A549 (cell line): ENCODE measurements at regions of chr14 and their contacts with region 1.

Region 1: DNA sequence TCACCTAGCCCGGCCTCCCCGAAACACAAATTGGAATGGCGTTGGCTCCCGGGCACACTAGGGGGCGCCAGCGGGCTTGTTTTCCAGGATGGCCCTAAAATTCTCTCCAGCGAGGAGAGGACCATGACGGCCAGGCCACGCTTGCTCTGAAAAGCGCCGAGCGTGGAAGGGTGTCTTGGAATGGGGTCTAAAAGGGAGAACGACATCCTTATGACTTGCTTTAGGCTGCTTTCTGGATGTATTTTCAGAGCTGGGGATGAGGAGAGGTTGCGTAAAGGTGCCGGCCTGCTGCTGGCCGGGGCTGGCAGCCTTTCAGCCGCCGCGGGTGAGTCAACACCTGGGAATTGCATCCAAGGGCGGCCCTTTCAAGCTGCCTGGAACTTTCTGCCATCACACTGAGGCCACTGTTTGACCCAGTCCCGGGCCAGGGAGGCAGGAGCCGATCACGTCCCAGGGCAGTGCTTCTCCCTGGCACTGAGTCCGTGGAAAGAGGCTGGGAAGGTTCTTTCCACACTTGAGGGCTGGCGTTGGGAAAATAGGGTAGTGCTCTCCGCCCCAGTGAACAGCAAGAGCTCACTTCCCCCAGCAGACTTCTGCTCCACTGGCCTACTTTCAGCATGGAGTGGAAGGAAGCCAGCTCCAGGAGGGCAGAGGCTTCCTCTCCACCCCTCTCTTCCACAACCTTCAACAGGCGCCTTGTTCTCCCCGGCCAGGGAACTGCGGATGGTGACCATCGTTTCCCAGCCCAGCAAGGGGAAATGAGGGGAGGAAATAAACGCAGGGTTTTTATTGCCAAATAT is 216.2 kb downstream of the TTC8 start:
- DNase-seq: peak; percentile 76
- ATAC-seq: peak; percentile 93 to 96
- H3K4me3 ChIP-seq: peak overlapping the region; percentile 44
- H3K27ac ChIP-seq: peak overlapping the region; percentile 81 to 88
- H3K4me1 ChIP-seq: peaks cover 10% of the 10 kb centered on the region
- CTCF ChIP-seq: peak; percentile 95
- EP300 ChIP-seq: no peak
- POLR2A ChIP-seq: no peak
- RAD21 ChIP-seq: peak; percentile 91 to 97

Region 2: DNA sequence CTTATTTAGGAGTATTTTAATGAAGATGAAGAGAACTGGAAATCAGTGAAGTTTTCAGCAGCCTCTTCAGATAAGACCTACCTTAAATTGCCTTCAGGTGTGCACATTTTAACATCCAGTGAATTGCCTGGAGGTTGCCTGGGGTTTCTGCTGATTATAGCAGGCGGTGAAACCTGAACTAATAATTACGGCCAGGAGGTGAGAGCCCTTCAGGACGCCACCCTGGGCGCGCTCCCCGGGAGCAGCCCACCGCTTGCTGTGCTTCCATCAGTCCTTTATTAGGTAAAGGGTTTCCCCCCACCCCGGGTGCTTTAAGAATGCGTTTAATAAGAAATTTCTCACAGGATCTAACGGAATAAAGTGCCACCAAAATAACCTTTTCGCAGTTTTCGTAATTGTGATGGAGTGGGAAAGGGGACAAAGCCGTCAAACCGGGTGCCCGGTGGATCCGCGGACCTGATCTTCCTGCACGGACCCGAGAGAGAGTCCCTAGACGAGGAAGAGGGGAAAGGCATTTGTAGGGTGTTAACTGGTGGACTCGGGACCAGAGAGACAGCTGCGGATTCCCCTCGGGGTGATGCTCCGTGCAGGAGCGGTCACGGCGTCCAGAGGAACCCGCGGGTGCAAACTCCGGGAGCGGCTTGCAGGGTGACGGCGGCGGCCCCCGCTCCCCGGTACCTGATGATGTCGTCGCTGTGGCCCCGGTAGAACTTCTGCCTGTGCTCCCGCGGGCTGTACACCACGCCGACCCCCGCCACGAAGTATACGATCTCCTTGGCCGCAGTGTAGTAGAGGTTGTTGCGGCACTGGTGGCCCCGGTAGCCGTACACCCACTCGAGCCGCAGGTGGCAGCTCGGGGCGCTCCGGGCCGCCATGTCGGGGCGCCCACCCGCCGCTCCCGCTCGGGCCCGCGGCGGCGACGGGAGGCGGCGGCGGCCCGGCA is 248.8 kb before region 1 on chr14:
- CTCF ChIA-PET with region 1: no interaction called
- POLR2A ChIA-PET with region 1: no interaction called
- DNase-seq: peak; percentile 5
- ATAC-seq: peak; percentile 24 to 27
- H3K4me3 ChIP-seq: peak overlapping the region; percentile 62
- H3K27ac ChIP-seq: peak overlapping the region; percentile 62 to 81
- H3K4me1 ChIP-seq: 0 out of 3 replicates have a peak, but pooled peaks cover 5% of the 10 kb centered on the region
- CTCF ChIP-seq: no peak
- EP300 ChIP-seq: no peak
- POLR2A ChIP-seq: no peak
- RAD21 ChIP-seq: no peak

Region 3: GRCh38 chr14:89085737-89086382 is 45.2 kb after region 1 on chr14:
- CTCF ChIA-PET with region 1: no interaction called
- POLR2A ChIA-PET with region 1: no interaction called
- DNase-seq: no peak
- ATAC-seq: no peak
- H3K4me3 ChIP-seq: no peak overlapping the region
- H3K27ac ChIP-seq: no peak overlapping the region
- H3K4me1 ChIP-seq: no peaks in the 10 kb centered on the region
- CTCF ChIP-seq: no peak
- EP300 ChIP-seq: no peak
- POLR2A ChIP-seq: no peak
- RAD21 ChIP-seq: no peak

Region 4: GRCh38 chr14:89915114-89915878 is 874.6 kb after region 1 on chr14:
- CTCF ChIA-PET with region 1: interaction called, 14 read pairs
- POLR2A ChIA-PET with region 1: no interaction called
- DNase-seq: peak; percentile 46 to 65
- ATAC-seq: peak in 1 of 2 experiments; percentile 62; a peak in 3 of 6 replicates
- H3K4me3 ChIP-seq: no peak overlapping the region
- H3K27ac ChIP-seq: no peak overlapping the region
- H3K4me1 ChIP-seq: peaks cover 31% of the 10 kb centered on the region
- CTCF ChIP-seq: peak; percentile 94
- EP300 ChIP-seq: no peak
- POLR2A ChIP-seq: no peak
- RAD21 ChIP-seq: peak; percentile 87 to 92

Region 5: DNA sequence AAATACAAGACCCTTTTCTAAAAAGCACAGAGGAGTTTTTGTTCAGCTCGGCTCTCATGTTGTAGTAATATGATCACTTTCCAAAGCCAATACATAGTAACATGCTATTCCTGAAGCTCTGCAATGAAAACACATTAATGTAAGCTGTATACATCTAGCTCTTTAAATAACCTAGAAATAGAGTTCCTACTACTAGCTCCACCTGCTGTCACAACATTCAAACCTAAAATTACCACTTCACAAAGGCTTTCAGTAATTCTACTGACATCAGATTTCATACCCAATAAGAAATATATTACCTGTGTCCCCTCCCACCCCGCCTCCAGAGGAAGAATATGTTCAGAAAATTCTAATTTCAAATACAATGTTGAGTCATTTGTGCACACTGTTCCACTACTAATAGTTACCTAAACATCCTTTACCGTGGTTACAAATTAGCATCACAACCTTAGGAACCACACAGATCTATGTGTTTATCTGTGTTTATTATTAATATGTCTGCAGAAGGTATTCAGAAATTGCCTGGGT is 896.1 kb after region 1 on chr14:
- CTCF ChIA-PET with region 1: interaction called, 10 read pairs
- POLR2A ChIA-PET with region 1: no interaction called
- DNase-seq: no peak
- ATAC-seq: no peak
- H3K4me3 ChIP-seq: no peak overlapping the region
- H3K27ac ChIP-seq: no peak overlapping the region
- H3K4me1 ChIP-seq: no peaks in the 10 kb centered on the region
- CTCF ChIP-seq: 0 out of 3 replicates have a peak, but pooled peaks have one; percentile 10
- EP300 ChIP-seq: no peak
- POLR2A ChIP-seq: no peak
- RAD21 ChIP-seq: no peak